ENCODE measurements at regions of chr16 and their contacts with region 1.

Region 1: GRCh38 chr16:20166531-20167235 is 93.0 kb upstream of the GPR139 start:
- DNase-seq: no peak
- ATAC-seq: no peak
- H3K4me3 ChIP-seq: no peak overlapping the region
- H3K27ac ChIP-seq: no peak overlapping the region
- H3K4me1 ChIP-seq: no peaks in the 10 kb centered on the region
- H3K27me3 ChIP-seq: no peaks in the 10 kb centered on the region
- CTCF ChIP-seq: no peak

Region 2: DNA sequence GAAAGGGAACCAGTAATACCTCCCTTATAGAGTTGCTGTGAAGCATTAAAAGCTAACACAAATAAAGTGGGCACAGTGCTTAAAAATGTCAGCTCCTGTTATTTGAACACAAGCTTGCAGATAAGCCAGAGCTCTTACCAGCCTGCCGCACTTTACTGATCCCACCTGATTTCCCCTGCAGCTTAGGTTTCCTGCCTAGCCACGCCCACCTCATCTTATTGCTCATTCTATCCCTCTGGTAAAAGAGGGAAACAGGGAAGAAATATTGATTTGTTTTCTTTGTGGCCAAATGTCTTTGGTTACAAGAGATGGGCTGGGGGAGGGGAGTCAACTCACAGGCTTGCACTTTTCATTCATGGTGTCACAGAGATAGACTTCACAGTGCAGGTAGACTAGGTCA is 170.3 kb after region 1 on chr16:
- intact Hi-C with region 1: loop called in 1 of 2 experiments (anchors 5 kb)
- DNase-seq: no peak
- ATAC-seq: no peak
- H3K4me3 ChIP-seq: no peak overlapping the region
- H3K27ac ChIP-seq: no peak overlapping the region
- H3K4me1 ChIP-seq: no peaks in the 10 kb centered on the region
- H3K27me3 ChIP-seq: no peaks in the 10 kb centered on the region
- CTCF ChIP-seq: no peak

Region 3: DNA sequence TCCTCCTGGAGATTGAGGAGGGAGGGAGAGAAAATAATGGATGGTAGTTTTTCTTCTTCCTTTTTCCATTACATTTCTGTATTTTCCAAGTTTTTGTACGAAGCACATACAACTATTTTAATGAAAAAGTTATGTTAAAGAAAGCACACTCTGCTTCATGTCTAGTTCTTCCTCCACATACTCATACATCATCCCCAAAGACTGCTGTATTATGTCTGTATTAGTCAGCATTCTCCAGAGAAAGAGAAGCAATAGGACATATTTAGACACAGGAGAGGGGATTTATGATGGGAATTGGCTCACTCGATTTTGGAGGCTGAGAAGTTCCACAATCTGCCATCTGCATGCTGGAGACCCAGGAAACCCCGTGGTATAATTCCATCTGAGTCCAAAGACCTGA is 274.5 kb after region 1 on chr16:
- intact Hi-C with region 1: no loop called
- DNase-seq: no peak
- ATAC-seq: no peak
- H3K4me3 ChIP-seq: no peak overlapping the region
- H3K27ac ChIP-seq: no peak overlapping the region
- H3K4me1 ChIP-seq: no peaks in the 10 kb centered on the region
- H3K27me3 ChIP-seq: no peaks in the 10 kb centered on the region
- CTCF ChIP-seq: no peak